ENCODE measurements at regions of chr18 and their contacts with region 1.

Region 1: GRCh38 chr18:23503038-23503962 is at the start of gene RMC1:
- DNase-seq: peak; percentile 98
- ATAC-seq: peak; percentile 90
- H3K4me3 ChIP-seq: peak within 1 kb of the TSS; percentile 68 to 98 (median 73)
- H3K4me3 Mint-ChIP-seq: peak within 1 kb of the TSS; percentile 94
- H3K27ac ChIP-seq: peak within 1 kb of the TSS; percentile 93 to 95
- H3K27ac Mint-ChIP-seq: peak within 1 kb of the TSS; percentile 94
- H3K4me1 ChIP-seq: peaks cover 55 to 72% of the 10 kb centered on the region in 2 donors
- H3K4me1 Mint-ChIP-seq: peaks cover 69% of the 10 kb centered on the region
- H3K27me3 ChIP-seq: no peaks in the 10 kb centered on the region
- H3K27me3 Mint-ChIP-seq: no peaks in the 10 kb centered on the region
- CTCF ChIP-seq: peak; percentile 18
- total RNA-seq, gene RMC1: 71.8 and 77.3 TPM in 2 replicates

Region 2: GRCh38 chr18:23131693-23132319 is 371.5 kb before region 1 on chr18:
- CTCF ChIA-PET with region 1: interaction called, 4 read pairs
- POLR2A ChIA-PET with region 1: interaction called, 7 read pairs
- intact Hi-C with region 1: loop called (anchors 2 kb)
- DNase-seq: peak; percentile 85
- ATAC-seq: no peak
- H3K4me3 ChIP-seq: no peak overlapping the region
- H3K4me3 Mint-ChIP-seq: no peak overlapping the region
- H3K27ac ChIP-seq: no peak overlapping the region
- H3K27ac Mint-ChIP-seq: no peak overlapping the region
- H3K4me1 ChIP-seq: peaks cover 24 to 28% of the 10 kb centered on the region in 2 donors
- H3K4me1 Mint-ChIP-seq: peaks cover 21% of the 10 kb centered on the region
- H3K27me3 ChIP-seq: peaks cover 0 to 33% (median 16%) of the 10 kb centered on the region in 4 experiments
- H3K27me3 Mint-ChIP-seq: peaks cover 16% of the 10 kb centered on the region
- CTCF ChIP-seq: peak; percentile 95

Region 3: GRCh38 chr18:23356915-23357601 is 146.2 kb before region 1 on chr18:
- CTCF ChIA-PET with region 1: no interaction called
- POLR2A ChIA-PET with region 1: no interaction called
- intact Hi-C with region 1: loop called (anchors 10 kb)
- DNase-seq: no peak
- ATAC-seq: no peak
- H3K4me3 ChIP-seq: no peak overlapping the region
- H3K4me3 Mint-ChIP-seq: no peak overlapping the region
- H3K27ac ChIP-seq: no peak overlapping the region
- H3K27ac Mint-ChIP-seq: no peak overlapping the region
- H3K4me1 ChIP-seq: peaks cover 17 to 24% of the 10 kb centered on the region in 2 donors
- H3K4me1 Mint-ChIP-seq: peaks cover 35% of the 10 kb centered on the region
- H3K27me3 ChIP-seq: no peaks in the 10 kb centered on the region
- H3K27me3 Mint-ChIP-seq: no peaks in the 10 kb centered on the region
- CTCF ChIP-seq: no peak

Region 4: GRCh38 chr18:23437357-23438045 is 65.8 kb before region 1 on chr18:
- CTCF ChIA-PET with region 1: no interaction called
- POLR2A ChIA-PET with region 1: no interaction called
- intact Hi-C with region 1: loop called (anchors 1 kb)
- DNase-seq: peak; percentile 80
- ATAC-seq: peak; percentile 100
- H3K4me3 ChIP-seq: peak overlapping the region; percentile 75 to 95 (median 92)
- H3K4me3 Mint-ChIP-seq: peak overlapping the region; percentile 92
- H3K27ac ChIP-seq: peak overlapping the region; percentile 16 to 70
- H3K27ac Mint-ChIP-seq: peak overlapping the region; percentile 67
- H3K4me1 ChIP-seq: peaks cover 11 to 20% of the 10 kb centered on the region in 2 donors
- H3K4me1 Mint-ChIP-seq: peaks cover 16% of the 10 kb centered on the region
- H3K27me3 ChIP-seq: no peaks in the 10 kb centered on the region
- H3K27me3 Mint-ChIP-seq: no peaks in the 10 kb centered on the region
- CTCF ChIP-seq: no peak

Region 5: DNA sequence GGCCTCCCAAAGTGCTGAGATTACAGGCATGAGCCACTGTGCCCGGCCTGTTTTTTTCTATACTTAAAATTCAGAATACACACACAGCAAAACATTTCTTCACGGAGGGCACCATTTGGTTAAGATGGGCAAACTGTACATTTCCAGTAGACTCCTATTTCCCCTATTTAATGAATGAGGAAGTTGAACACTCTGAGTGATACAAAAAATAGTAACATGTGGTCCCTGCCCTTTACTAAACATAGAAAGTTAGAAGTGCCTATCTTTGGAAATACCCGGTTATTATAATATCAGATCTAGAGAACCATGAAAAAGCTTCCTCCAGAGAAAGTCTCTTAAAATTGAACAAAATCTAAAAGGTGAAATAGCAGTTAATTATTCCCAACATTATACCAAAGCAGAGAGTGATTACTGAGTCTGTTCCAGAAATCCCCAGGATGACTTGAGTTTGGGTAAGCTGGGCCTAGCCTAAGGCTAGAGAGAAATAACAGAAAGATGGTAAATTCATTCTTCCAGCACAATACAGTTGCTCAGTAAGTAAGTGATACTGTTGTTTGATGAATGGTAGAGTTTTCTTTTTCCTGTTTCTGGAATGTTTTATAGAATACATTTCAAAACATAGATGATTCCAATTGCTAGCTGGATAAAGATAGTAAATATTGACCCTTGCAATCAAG is 23.3 kb before region 1 on chr18:
- CTCF ChIA-PET with region 1: interaction called, 61 read pairs
- POLR2A ChIA-PET with region 1: interaction called, 6 read pairs
- intact Hi-C with region 1: loop called (anchors 1 kb)
- DNase-seq: peak; percentile 79
- ATAC-seq: peak; percentile 86
- H3K4me3 ChIP-seq: peak overlapping the region in 3 of 5 experiments; percentile 0 to 29 (median 3)
- H3K4me3 Mint-ChIP-seq: peak overlapping the region; percentile 77
- H3K27ac ChIP-seq: peak overlapping the region; percentile 73 to 86
- H3K27ac Mint-ChIP-seq: peak overlapping the region; percentile 88
- H3K4me1 ChIP-seq: peaks cover 51 to 60% of the 10 kb centered on the region in 2 donors
- H3K4me1 Mint-ChIP-seq: peaks cover 58% of the 10 kb centered on the region
- H3K27me3 ChIP-seq: no peaks in the 10 kb centered on the region
- H3K27me3 Mint-ChIP-seq: no peaks in the 10 kb centered on the region
- CTCF ChIP-seq: no peak

Region 6: GRCh38 chr18:23515911-23516546 is 12.7 kb after region 1 on chr18:
- CTCF ChIA-PET with region 1: interaction called, 27 read pairs
- POLR2A ChIA-PET with region 1: no interaction called
- intact Hi-C with region 1: no loop called
- DNase-seq: peak; percentile 82
- ATAC-seq: peak; percentile 97
- H3K4me3 ChIP-seq: no peak overlapping the region
- H3K4me3 Mint-ChIP-seq: no peak overlapping the region
- H3K27ac ChIP-seq: peak overlapping the region in 1 of 2 donors; percentile 57
- H3K27ac Mint-ChIP-seq: peak overlapping the region; percentile 46
- H3K4me1 ChIP-seq: peaks cover 9 to 12% of the 10 kb centered on the region in 2 donors
- H3K4me1 Mint-ChIP-seq: peaks cover 22% of the 10 kb centered on the region
- H3K27me3 ChIP-seq: no peaks in the 10 kb centered on the region
- H3K27me3 Mint-ChIP-seq: no peaks in the 10 kb centered on the region
- CTCF ChIP-seq: peak; percentile 92

Region 7: GRCh38 chr18:24014062-24014985 is 511.0 kb after region 1 on chr18 and contains the start of gene TTC39C:
- CTCF ChIA-PET with region 1: interaction called, 5 read pairs
- POLR2A ChIA-PET with region 1: no interaction called
- intact Hi-C with region 1: loop called (anchors 2 kb)
- DNase-seq: peak; percentile 81
- ATAC-seq: peak; percentile 63
- H3K4me3 ChIP-seq: peak within 1 kb of the TSS; percentile 77 to 85 (median 78)
- H3K4me3 Mint-ChIP-seq: peak within 1 kb of the TSS; percentile 91
- H3K27ac ChIP-seq: peak within 1 kb of the TSS; percentile 78 to 80
- H3K27ac Mint-ChIP-seq: peak within 1 kb of the TSS; percentile 85
- H3K4me1 ChIP-seq: peaks cover 72 to 85% of the 10 kb centered on the region in 2 donors
- H3K4me1 Mint-ChIP-seq: peaks cover 76% of the 10 kb centered on the region
- H3K27me3 ChIP-seq: no peaks in the 10 kb centered on the region
- H3K27me3 Mint-ChIP-seq: no peaks in the 10 kb centered on the region
- CTCF ChIP-seq: no peak
- total RNA-seq, gene TTC39C: 44.3 and 52.9 TPM in 2 replicates

Measured in B cell (primary cell).